RWPE1 (cell line): ENCODE measurements at regions of chr1 and their contacts with region 1.

Region 1: GRCh38 chr1:197224160-197224559 is 43.9 kb upstream of the CRB1 start:
- DNase-seq: no peak
- H3K27ac ChIP-seq: no peak overlapping the region
- CTCF ChIP-seq: no peak; the same call in 1 of the 2 replicates

Region 2: GRCh38 chr1:197116156-197116555 is 108.0 kb before region 1 on chr1:
- CTCF ChIA-PET with region 1: no interaction called
- POLR2A ChIA-PET with region 1: no interaction called
- DNase-seq: no peak
- H3K27ac ChIP-seq: no peak overlapping the region
- CTCF ChIP-seq: no peak

Region 3: GRCh38 chr1:197336571-197336970 is 112.4 kb after region 1 on chr1:
- CTCF ChIA-PET with region 1: interaction called, 19 read pairs
- POLR2A ChIA-PET with region 1: no interaction called
- DNase-seq: no peak
- H3K27ac ChIP-seq: no peak overlapping the region
- CTCF ChIP-seq: no peak